ENCODE measurements at regions of chr1 and their contacts with region 1.

Region 1: GRCh38 chr1:169348383-169349036 is 19.1 kb downstream of the NME7 start:
- DNase-seq: peak; percentile 37
- H3K4me3 ChIP-seq: no peak overlapping the region; a peak in 1 of 4 replicates
- H3K27ac ChIP-seq: no peak overlapping the region
- H3K4me1 ChIP-seq: peaks cover 4% of the 10 kb centered on the region in 2 experiments; a peak in 1 of 4 replicates
- H3K27me3 ChIP-seq: no peaks in the 10 kb centered on the region
- CTCF ChIP-seq: peak; percentile 87
- EP300 ChIP-seq: no peak
- RAD21 ChIP-seq: peak; percentile 92

Region 2: DNA sequence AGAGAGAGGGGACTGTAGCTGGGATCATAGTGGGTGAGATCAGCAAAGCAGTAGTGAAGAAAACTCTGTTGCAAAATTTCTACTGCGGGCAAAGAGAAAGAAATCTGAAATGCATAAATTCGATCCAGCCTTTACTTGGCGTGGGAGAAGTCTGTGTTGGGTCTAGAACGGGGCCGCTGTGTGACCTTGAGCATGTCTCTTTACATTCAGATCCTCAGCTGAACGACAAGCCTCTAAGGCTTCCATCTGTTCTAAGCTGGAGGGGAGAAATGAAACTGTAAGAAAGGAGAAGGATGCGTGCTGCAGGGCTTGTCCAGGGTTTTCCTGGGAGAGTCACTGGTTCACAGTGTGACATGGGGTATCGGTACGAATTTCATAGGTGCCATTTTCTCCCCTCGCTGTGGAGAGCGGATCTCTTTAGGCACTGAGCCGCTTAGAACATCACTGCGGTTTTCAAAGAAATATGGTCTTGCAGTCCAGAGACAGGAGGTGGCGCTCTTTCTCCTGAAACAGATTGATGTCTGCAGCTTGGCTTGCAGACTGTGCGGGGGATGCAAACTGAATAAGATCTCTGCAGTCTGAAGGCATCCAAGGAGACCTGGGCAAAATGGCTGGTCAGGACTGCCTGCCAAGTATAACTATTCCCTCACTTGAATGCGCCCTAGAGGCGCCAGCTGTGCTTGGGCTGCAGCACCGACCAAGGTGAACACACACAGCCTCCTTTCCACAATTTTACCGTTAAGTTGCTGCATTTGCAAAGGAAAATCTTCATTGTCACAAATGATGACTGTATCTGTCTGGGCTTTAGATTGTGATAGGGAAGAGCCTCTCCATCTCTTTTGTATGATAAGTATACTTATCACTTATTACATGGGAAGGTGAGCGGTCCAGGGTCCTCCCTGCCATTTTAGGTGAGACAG is 908.8 kb before region 1 on chr1:
- CTCF ChIA-PET with region 1: interaction called, 29 read pairs
- POLR2A ChIA-PET with region 1: no interaction called
- DNase-seq: peak; percentile 72
- H3K4me3 ChIP-seq: peak overlapping the region; percentile 34 to 38
- H3K27ac ChIP-seq: peak overlapping the region in 1 of 2 experiments; percentile 86; a peak in 3 of 4 replicates
- H3K4me1 ChIP-seq: peaks cover 0 to 11% of the 10 kb centered on the region in 2 experiments; a peak in 2 of 4 replicates
- H3K27me3 ChIP-seq: no peaks in the 10 kb centered on the region
- CTCF ChIP-seq: peak; percentile 90
- EP300 ChIP-seq: peak; percentile 15 to 21; a peak in 2 of 4 replicates
- RAD21 ChIP-seq: peak; percentile 99

Region 3: GRCh38 chr1:168637350-168637991 is 711.0 kb before region 1 on chr1:
- CTCF ChIA-PET with region 1: interaction called, 18 read pairs
- POLR2A ChIA-PET with region 1: no interaction called
- DNase-seq: peak; percentile 6
- H3K4me3 ChIP-seq: no peak overlapping the region; a peak in 1 of 4 replicates
- H3K27ac ChIP-seq: peak overlapping the region in 1 of 2 experiments; percentile 36; a peak in 1 of 4 replicates
- H3K4me1 ChIP-seq: peaks cover 0 to 8% of the 10 kb centered on the region in 2 experiments; a peak in 2 of 4 replicates
- H3K27me3 ChIP-seq: no peaks in the 10 kb centered on the region
- CTCF ChIP-seq: peak; percentile 62
- EP300 ChIP-seq: no peak
- RAD21 ChIP-seq: peak; percentile 62

Region 4: GRCh38 chr1:169321552-169321951 is 27.0 kb before region 1 on chr1:
- CTCF ChIA-PET with region 1: interaction called, 10 read pairs
- POLR2A ChIA-PET with region 1: no interaction called
- DNase-seq: no peak
- H3K4me3 ChIP-seq: no peak overlapping the region
- H3K27ac ChIP-seq: no peak overlapping the region
- H3K4me1 ChIP-seq: peaks cover 0 to 7% of the 10 kb centered on the region in 2 experiments; a peak in 3 of 4 replicates
- H3K27me3 ChIP-seq: no peaks in the 10 kb centered on the region
- CTCF ChIP-seq: no peak
- EP300 ChIP-seq: no peak
- RAD21 ChIP-seq: no peak

Region 5: GRCh38 chr1:169367486-169368405 is 19.2 kb after region 1 on chr1 and contains the starts of genes BLZF1 and NME7:
- CTCF ChIA-PET with region 1: interaction called, 12 read pairs
- POLR2A ChIA-PET with region 1: no interaction called
- DNase-seq: peak; percentile 84
- H3K4me3 ChIP-seq: peak within 1 kb of the TSS; percentile 84 to 96
- H3K27ac ChIP-seq: peak within 1 kb of the TSS; percentile 90 to 98
- H3K4me1 ChIP-seq: peaks cover 7 to 25% of the 10 kb centered on the region in 2 experiments; a peak in 3 of 4 replicates
- H3K27me3 ChIP-seq: no peaks in the 10 kb centered on the region
- CTCF ChIP-seq: no peak
- EP300 ChIP-seq: no peak
- RAD21 ChIP-seq: no peak
- polyA plus RNA-seq, gene BLZF1: 9.5 and 16.0 TPM in 2 replicates
- polyA plus RNA-seq, gene NME7: 13.7 and 20.6 TPM in 2 replicates